WTC11 (cell line): ENCODE measurements at regions of chr7 and their contacts with region 1.

Region 1: GRCh38 chr7:95246831-95247370 is 77.4 kb downstream of the PON1 start:
- DNase-seq: peak; percentile 40
- ATAC-seq: peak; percentile 87
- H3K4me3 Mint-ChIP-seq: peak overlapping the region; percentile 43
- H3K27ac Mint-ChIP-seq: no peak overlapping the region; the same call in 1 of the 2 replicates
- H3K4me1 Mint-ChIP-seq: peaks cover 24% of the 10 kb centered on the region
- H3K27me3 Mint-ChIP-seq: no peaks in the 10 kb centered on the region
- CTCF ChIP-seq: peak; percentile 56

Region 2: GRCh38 chr7:94657771-94658693 is 588.9 kb before region 1 on chr7:
- CTCF ChIA-PET with region 1: interaction called, 11 read pairs
- POLR2A ChIA-PET with region 1: no interaction called
- DNase-seq: peak; percentile 96
- ATAC-seq: peak; percentile 86
- H3K4me3 Mint-ChIP-seq: peak overlapping the region; percentile 91
- H3K27ac Mint-ChIP-seq: peak overlapping the region; percentile 94; the same call in 1 of the 2 replicates
- H3K4me1 Mint-ChIP-seq: peaks cover 21% of the 10 kb centered on the region
- H3K27me3 Mint-ChIP-seq: peaks cover 16% of the 10 kb centered on the region
- CTCF ChIP-seq: no peak

Region 3: GRCh38 chr7:95476904-95477594 is 230.1 kb after region 1 on chr7:
- CTCF ChIA-PET with region 1: interaction called, 16 read pairs
- POLR2A ChIA-PET with region 1: no interaction called
- DNase-seq: peak; percentile 58
- ATAC-seq: peak; percentile 36
- H3K4me3 Mint-ChIP-seq: no peak overlapping the region; the same call in 1 of the 2 replicates
- H3K27ac Mint-ChIP-seq: no peak overlapping the region
- H3K4me1 Mint-ChIP-seq: peaks cover 20% of the 10 kb centered on the region
- H3K27me3 Mint-ChIP-seq: no peaks in the 10 kb centered on the region
- CTCF ChIP-seq: no peak